Heart right ventricle (tissue), 16 donors: ENCODE measurements at regions of chr5 and their contacts with region 1.

Region 1: DNA sequence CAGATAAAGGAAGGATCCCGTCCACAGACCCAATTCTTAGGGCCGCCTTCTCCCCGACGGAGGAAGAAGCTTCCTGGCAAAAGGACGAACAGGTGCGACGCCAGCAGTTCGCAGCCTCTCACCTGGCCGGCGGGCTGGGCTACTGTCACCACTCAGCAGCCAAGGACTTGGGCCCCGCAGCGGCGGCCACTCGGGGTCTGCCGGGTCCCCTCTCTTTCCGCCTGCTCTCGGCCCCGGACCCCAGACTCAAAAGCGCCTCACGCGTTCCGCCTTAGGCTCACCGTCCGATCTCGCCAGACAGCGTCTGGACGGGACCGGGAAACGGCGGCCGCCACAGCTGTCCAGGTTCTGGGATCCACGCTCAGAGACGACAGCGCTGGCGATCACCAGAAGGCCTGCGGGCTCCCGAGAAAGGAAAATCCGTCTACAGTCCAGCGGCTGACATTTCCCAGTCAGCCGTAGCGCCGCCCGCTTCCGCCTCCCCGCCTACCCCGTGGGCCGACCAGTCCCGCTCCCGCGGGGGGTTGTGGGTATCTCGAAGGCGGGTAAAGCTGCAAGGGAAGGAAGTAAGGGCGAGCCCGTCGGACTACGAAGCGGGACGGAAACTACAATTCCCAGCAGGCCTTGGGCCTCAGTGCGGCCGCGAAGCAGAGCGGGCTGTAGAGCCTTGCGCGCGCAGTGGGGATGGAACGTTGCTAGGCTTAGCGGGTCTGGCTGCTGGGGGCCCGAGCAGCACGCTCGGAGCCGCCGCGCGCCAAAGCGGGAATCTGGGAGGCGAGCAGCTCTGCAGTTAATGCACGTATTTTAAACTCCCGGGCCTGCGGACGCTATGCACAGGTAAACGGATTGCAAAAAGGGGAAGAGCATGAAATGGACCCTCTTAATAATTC is at the starts of genes LMBRD2 and SKP2:
- DNase-seq: peak; percentile 96 to 99
- ATAC-seq: peak; percentile 99 to 100 (median 99)
- H3K4me3 ChIP-seq: peak within 1 kb of the TSS; percentile 86 to 100 (median 94)
- H3K27ac ChIP-seq: peak within 1 kb of the TSS; percentile 62 to 92 (median 88)
- H3K4me1 ChIP-seq: peaks cover 2 to 58% (median 38%) of the 10 kb centered on the region in 9 donors
- H3K27me3 ChIP-seq: no peaks in the 10 kb centered on the region
- CTCF ChIP-seq: no peak
- total RNA-seq, gene LMBRD2: 10.9 to 16.5 (median 12.7) TPM
- total RNA-seq, gene SKP2: 3.5 to 9.5 (median 5.6) TPM

Region 2: DNA sequence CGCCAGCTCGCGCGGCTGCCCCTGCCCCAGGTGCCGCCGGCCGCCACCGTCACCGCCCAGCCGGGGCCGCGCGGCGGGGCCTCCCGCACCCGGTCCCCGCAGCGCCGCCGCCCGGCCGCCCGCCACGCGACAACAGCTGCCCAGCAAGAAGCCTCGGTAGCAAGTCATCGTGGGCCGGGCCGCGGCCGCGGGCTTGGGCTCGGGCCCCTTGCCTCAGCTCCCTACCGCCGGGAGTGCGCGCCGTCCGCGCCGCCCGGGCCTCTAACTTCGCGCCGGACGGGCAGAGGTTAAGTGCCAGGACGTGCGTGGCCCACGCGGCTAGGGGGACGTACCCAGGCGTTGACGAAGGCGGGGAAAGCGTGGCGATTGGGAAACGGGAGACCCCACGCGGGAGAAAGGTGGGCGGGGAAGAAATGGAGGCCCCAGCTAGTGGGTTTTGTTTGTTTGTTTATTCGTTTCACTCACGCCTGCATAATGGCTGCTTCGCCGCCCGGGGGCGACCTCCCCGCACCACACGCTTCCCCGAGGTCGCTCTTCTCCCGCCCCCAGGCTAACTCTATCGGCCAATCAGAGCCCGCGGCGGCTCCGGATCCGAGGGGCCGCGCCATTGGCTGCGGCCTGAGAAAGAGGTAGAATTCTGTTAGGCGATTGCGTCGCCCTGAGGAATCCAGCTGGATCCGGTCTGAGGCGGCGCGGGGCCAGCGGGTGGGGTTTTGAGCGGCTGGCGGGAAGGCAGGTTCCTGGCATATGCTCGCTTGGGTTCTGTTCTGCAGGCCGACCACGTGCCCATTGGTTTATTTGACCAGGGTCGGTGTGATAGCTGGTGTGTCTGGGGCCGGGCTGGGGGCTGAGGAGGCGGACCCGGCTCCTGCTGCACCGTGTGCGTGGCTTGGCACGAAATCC is 90.2 kb after region 1 on chr5 and contains the start of gene NADK2:
- intact Hi-C with region 1: loop called in 3 of 10 experiments (anchors 1 to 5 kb)
- DNase-seq: peak; percentile 95 to 97
- ATAC-seq: peak; percentile 92 to 97 (median 95)
- H3K4me3 ChIP-seq: peak within 1 kb of the TSS; percentile 63 to 96 (median 90)
- H3K27ac ChIP-seq: peak within 1 kb of the TSS; percentile 87 to 98 (median 97)
- H3K4me1 ChIP-seq: peaks cover 0 to 48% (median 36%) of the 10 kb centered on the region in 9 donors
- H3K27me3 ChIP-seq: no peaks in the 10 kb centered on the region
- CTCF ChIP-seq: peak; percentile 45 to 89 (median 75)
- total RNA-seq, gene NADK2: 35.7 to 53.5 (median 38.9) TPM